Esophagus muscularis mucosa (tissue), 4 donors: ENCODE measurements at regions of chr22 and their contacts with region 1.

Region 1: DNA sequence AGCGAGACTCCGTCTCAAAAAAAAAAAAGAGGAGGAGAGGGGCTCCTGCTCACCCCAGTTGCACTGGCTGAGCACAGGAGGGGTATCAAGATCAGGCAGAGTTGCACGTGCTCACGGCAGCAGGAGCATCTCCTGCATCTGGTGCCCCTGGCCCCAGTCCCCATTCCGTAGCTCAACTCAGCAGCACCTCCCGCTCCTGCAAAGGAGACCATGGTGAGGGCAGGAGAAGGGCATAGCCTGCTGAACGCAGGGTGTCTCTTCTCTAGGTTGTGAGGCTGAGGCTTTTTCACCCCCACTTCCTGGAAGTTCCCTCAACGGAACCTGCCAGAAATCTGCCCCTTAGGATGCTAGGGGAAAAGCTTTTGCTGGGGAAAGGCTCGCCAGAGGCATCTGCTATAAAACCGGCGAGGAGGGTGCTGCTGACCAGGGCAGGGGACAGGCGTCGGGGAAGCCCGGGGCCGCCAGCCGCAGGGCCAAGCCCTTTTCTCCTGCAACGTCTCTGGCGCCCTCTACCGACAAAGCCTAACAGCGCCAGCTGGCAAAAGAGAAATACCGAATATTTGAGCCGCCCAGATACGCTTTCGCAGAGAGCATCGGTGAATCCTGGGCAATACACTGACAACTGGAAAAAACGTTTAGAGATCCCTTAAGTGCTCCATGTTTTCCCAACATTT is 1.0 kb upstream of the PPP6R2 start:
- DNase-seq: peak; percentile 96
- H3K4me3 ChIP-seq: peak overlapping the region; percentile 91 to 98 (median 96)
- H3K27ac ChIP-seq: peak overlapping the region; percentile 83 to 90 (median 88)
- H3K4me1 ChIP-seq: peaks cover 5 to 25% (median 23%) of the 10 kb centered on the region in 4 donors
- H3K27me3 ChIP-seq: no peaks in the 10 kb centered on the region
- CTCF ChIP-seq: peak; percentile 87 to 98 (median 97)
- EP300 ChIP-seq: no peak
- POLR2A ChIP-seq: no peak

Region 2: GRCh38 chr22:50252081-50253045 is 89.8 kb before region 1 on chr22:
- intact Hi-C with region 1: loop called (anchors 1 kb)
- DNase-seq: no peak
- H3K4me3 ChIP-seq: peak overlapping the region; percentile 68 to 82 (median 76)
- H3K27ac ChIP-seq: peak overlapping the region; percentile 72 to 83 (median 78)
- H3K4me1 ChIP-seq: peaks cover 24 to 49% (median 44%) of the 10 kb centered on the region in 4 donors
- H3K27me3 ChIP-seq: peaks cover 0 to 2% (median 0%) of the 10 kb centered on the region in 4 donors
- CTCF ChIP-seq: peak; percentile 62 to 74 (median 67)
- EP300 ChIP-seq: no peak
- POLR2A ChIP-seq: no peak

Region 3: DNA sequence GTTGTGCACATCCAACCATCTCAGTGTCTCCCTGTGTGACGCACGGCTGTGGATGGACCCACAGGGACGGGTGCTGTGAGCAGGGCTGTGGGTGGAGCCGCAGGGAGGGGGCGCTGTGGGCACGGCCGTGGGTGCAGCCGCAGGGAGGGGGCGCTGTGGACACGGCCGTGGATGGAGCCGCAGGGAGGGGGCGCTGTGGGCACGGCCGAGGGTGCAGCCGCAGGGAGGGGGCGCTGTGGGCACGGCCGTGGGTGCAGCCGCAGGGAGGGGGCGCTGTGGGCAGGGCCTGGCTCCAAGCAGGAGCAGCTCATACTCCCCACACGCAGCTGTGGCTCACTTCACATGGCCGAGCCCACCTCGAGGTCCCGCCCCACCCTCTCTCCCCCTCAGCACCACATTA is 66.0 kb before region 1 on chr22:
- intact Hi-C with region 1: loop called (anchors 5 kb)
- DNase-seq: no peak
- H3K4me3 ChIP-seq: no peak overlapping the region
- H3K27ac ChIP-seq: peak overlapping the region in 3 of 4 donors; percentile 47 to 64 (median 53)
- H3K4me1 ChIP-seq: peaks cover 21 to 43% (median 31%) of the 10 kb centered on the region in 4 donors
- H3K27me3 ChIP-seq: peaks cover 0 to 10% (median 0%) of the 10 kb centered on the region in 4 donors
- CTCF ChIP-seq: peak; percentile 12 to 62 (median 53)
- EP300 ChIP-seq: no peak
- POLR2A ChIP-seq: no peak